Heart left ventricle (tissue), 16 donors: ENCODE measurements at regions of chr7 and their contacts with region 1.

Region 1: DNA sequence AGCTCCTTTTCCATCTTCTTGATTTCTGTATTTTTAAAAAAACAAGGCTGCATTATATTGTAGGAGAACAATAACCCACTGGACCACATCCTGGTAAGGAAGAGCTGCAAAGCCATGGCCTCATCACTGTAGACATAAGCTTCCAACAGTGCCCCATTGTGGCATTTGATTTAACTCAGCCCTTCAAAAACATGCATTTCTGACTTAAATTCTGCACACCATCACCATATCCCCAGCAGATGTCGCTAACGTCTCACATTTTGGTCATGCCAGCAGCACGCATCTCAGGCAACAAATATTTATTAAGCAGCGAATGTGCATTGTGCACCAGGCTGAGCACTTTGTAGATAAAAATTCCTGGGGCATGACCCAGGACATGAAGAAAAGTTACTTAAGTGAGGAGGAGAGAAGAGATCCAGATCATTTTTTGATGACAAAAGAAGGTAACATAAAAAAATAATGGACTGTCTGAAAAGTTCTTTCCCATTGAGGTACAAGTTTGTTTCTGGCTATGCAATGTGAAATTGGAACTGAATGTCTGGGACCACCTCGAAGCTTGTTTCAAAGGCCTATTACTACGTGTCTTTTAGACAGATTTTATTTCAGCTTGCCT is 164.6 kb upstream of the CDCA7L start:
- DNase-seq: peak in 4 of 5 donors; percentile 44 to 74 (median 60)
- ATAC-seq: peak; percentile 64 to 77 (median 75)
- H3K4me3 ChIP-seq: no peak overlapping the region
- H3K27ac ChIP-seq: peak overlapping the region in 1 of 12 donors; percentile 2
- H3K4me1 ChIP-seq: peaks cover 0 to 25% (median 3%) of the 10 kb centered on the region in 12 donors
- H3K27me3 ChIP-seq: peaks cover 0 to 3% (median 0%) of the 10 kb centered on the region in 9 donors
- CTCF ChIP-seq: peak; percentile 66 to 88 (median 81)
- POLR2A ChIP-seq: peak in 1 of 2 donors; percentile 8

Region 2: DNA sequence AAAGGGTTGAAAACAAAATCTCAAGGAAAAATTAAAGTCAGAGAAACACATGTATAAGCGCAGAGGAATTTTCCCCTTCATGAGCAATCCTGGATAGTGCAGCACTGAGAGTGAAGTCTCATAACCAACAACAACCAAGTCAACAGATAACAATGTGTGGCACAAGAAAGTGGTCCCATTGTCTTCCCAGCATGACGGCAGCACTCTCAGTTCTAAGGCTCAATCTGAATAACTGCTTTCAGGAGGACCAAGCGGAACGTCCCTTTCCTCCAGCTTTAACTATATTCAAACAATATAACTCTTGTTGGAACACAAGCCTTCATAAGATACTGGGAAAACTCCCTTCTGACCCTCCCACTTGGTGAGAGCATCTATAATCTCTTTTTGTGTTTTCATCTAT is 108.7 kb after region 1 on chr7:
- intact Hi-C with region 1: loop called in 1 of 10 experiments (anchors 5 kb)
- DNase-seq: no peak
- ATAC-seq: peak; percentile 15 to 47 (median 43)
- H3K4me3 ChIP-seq: peak overlapping the region; percentile 18 to 71 (median 56)
- H3K27ac ChIP-seq: peak overlapping the region; percentile 61 to 89 (median 82)
- H3K4me1 ChIP-seq: peaks cover 0 to 49% (median 15%) of the 10 kb centered on the region in 12 donors
- H3K27me3 ChIP-seq: no peaks in the 10 kb centered on the region
- CTCF ChIP-seq: no peak
- POLR2A ChIP-seq: peak in 1 of 2 donors; percentile 23

Region 3: DNA sequence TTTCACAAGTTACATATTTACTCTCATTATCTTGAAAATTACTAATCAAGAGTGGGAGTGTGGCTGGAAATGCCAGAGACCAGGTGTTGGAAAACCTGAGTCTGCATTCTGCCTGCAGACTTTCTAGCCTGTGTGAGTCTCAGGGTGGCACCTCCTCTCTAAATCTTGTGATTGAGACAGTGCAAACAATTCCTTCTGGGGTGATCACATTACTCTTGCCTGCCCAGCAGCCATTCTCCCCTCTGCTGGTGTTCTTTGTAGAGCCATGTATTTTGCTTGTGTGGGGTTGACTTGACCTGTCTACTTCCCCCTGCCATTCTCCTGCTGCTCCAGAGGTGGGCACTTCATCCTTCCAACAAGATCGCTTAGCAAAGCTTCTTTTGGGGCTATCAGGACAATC is 145.5 kb after region 1 on chr7:
- intact Hi-C with region 1: loop called in 7 of 10 experiments (anchors 5 to 10 kb)
- DNase-seq: no peak
- ATAC-seq: peak in 1 of 4 donors; percentile 22
- H3K4me3 ChIP-seq: no peak overlapping the region
- H3K27ac ChIP-seq: peak overlapping the region in 1 of 12 donors; percentile 33
- H3K4me1 ChIP-seq: peaks cover 0 to 16% (median 0%) of the 10 kb centered on the region in 12 donors
- H3K27me3 ChIP-seq: no peaks in the 10 kb centered on the region
- CTCF ChIP-seq: no peak
- POLR2A ChIP-seq: no peak

Region 4: GRCh38 chr7:22295402-22296264 is 185.3 kb after region 1 on chr7:
- intact Hi-C with region 1: loop called in 9 of 10 experiments (anchors 1 to 10 kb)
- DNase-seq: no peak
- ATAC-seq: peak in 3 of 4 donors; percentile 50 to 76 (median 64)
- H3K4me3 ChIP-seq: no peak overlapping the region
- H3K27ac ChIP-seq: peak overlapping the region in 1 of 12 donors; percentile 24
- H3K4me1 ChIP-seq: peaks cover 0 to 8% (median 0%) of the 10 kb centered on the region in 12 donors
- H3K27me3 ChIP-seq: no peaks in the 10 kb centered on the region
- CTCF ChIP-seq: peak in 8 of 12 donors; percentile 13 to 50 (median 38)
- POLR2A ChIP-seq: no peak

Region 5: GRCh38 chr7:22488643-22489462 is 378.5 kb after region 1 on chr7:
- intact Hi-C with region 1: loop called (anchors 1 to 2 kb)
- DNase-seq: peak in 4 of 5 donors; percentile 54 to 63 (median 59)
- ATAC-seq: peak in 3 of 4 donors; percentile 80 to 87 (median 85)
- H3K4me3 ChIP-seq: no peak overlapping the region
- H3K27ac ChIP-seq: no peak overlapping the region
- H3K4me1 ChIP-seq: peaks cover 0 to 7% (median 1%) of the 10 kb centered on the region in 12 donors
- H3K27me3 ChIP-seq: peaks cover 0 to 4% (median 0%) of the 10 kb centered on the region in 9 donors
- CTCF ChIP-seq: peak; percentile 84 to 96 (median 88)
- POLR2A ChIP-seq: no peak

Region 6: GRCh38 chr7:22726345-22727185 is 616.2 kb after region 1 on chr7:
- intact Hi-C with region 1: loop called in 1 of 10 experiments (anchors 10 kb)
- DNase-seq: peak in 4 of 5 donors; percentile 31 to 56 (median 42)
- ATAC-seq: peak; percentile 29 to 72 (median 52)
- H3K4me3 ChIP-seq: peak overlapping the region; percentile 3 to 57 (median 45)
- H3K27ac ChIP-seq: peak overlapping the region; percentile 19 to 85 (median 70)
- H3K4me1 ChIP-seq: peaks cover 4 to 78% (median 40%) of the 10 kb centered on the region in 12 donors
- H3K27me3 ChIP-seq: no peaks in the 10 kb centered on the region
- CTCF ChIP-seq: peak; percentile 27 to 61 (median 46)
- POLR2A ChIP-seq: no peak